ENCODE measurements at regions of chr4 and their contacts with region 1.

Region 1: DNA sequence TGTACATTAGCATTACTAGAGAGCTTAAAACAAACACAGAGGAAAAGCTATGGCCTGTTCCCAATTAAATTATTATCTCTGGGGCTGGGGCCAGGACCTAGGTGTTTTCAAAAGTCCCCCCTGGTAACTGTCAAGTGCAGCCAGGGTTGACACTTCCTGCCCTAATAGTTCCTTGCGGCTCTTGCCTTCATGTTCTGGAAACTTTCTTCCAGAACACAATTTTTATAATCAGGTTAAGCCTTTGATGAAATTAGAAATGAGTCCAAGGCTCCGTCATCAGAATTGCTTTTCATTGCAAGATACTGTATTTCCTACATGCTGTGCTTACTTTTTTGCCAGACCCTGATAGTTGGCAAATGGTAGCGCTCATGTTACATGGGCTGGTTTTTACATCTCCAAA is 229.6 kb downstream of the UNC5C start:
- DNase-seq: no peak
- ATAC-seq: no peak
- H3K4me3 ChIP-seq: no peak overlapping the region
- H3K27ac ChIP-seq: no peak overlapping the region
- H3K4me1 ChIP-seq: no peaks in the 10 kb centered on the region; the same call in 1 of the 2 replicates
- H3K27me3 ChIP-seq: no peaks in the 10 kb centered on the region
- CTCF ChIP-seq: no peak

Region 2: DNA sequence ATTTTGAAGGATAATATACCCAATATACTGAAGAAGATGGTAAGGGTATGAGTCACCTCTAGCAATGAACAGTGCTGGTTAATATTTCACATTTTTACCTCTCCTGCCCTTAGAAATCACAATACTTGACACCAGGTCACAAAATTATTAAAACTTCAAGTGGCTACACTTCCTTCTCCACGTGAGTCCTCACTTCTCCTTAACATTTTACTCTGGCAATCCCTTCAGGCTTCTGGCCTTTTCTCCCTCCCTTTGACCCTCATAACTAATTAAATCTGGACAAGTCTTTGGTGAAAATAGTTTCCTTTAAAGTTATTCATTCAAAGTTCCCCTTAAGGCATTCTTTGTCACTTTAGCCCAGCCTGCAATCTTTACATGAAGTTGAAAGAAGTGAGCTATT is 39.3 kb after region 1 on chr4:
- CTCF ChIA-PET with region 1: interaction called, 10 read pairs
- POLR2A ChIA-PET with region 1: no interaction called
- intact Hi-C with region 1: no loop called
- DNase-seq: no peak
- ATAC-seq: no peak
- H3K4me3 ChIP-seq: no peak overlapping the region
- H3K27ac ChIP-seq: no peak overlapping the region
- H3K4me1 ChIP-seq: no peaks in the 10 kb centered on the region
- H3K27me3 ChIP-seq: no peaks in the 10 kb centered on the region
- CTCF ChIP-seq: no peak

Region 3: DNA sequence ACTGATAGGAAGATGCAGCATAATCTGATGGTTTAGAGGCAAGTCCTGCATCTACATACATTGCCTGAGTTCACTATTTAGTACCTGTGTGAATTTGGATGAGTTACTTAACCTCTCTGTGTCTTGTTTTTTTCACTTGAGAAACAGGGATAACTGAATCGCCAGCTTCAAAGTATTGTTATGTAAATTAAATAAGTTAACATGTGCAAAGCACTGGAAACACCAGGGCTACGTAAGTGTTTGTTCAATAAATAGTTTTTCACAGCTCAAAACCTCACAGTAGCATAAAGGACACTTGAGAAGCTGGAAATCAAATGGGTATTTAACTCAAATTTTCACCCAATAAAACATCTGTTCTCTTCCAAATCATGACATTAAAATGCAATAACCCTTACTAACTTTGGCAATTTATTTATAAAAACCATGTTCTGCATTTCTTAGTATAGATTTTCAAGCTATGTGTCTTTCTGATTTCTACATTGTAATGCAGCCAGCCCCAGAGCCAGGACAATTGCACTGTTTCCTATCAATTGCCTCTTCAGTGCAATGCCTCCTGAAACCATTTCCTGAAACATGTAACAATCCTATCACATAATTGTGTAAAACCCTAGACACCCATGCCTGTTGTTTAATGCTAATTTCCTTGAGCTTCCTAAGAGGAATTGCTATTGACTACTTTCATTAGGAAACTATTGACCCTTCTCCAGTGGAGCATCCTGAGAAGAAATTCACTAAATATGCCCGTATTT is 52.5 kb after region 1 on chr4:
- CTCF ChIA-PET with region 1: no interaction called
- POLR2A ChIA-PET with region 1: no interaction called
- intact Hi-C with region 1: no loop called
- DNase-seq: no peak
- ATAC-seq: no peak
- H3K4me3 ChIP-seq: no peak overlapping the region
- H3K27ac ChIP-seq: no peak overlapping the region
- H3K4me1 ChIP-seq: no peaks in the 10 kb centered on the region
- H3K27me3 ChIP-seq: no peaks in the 10 kb centered on the region
- CTCF ChIP-seq: no peak

Measured in PC-3 (cell line).